HEK293T (cell line): ENCODE measurements at regions of chr9 and their contacts with region 1.

Region 1: GRCh38 chr9:132249123-132249522 is 87.3 kb downstream of the NTNG2 start:
- DNase-seq: no peak

Region 2: GRCh38 chr9:131759017-131759647 is 490.0 kb before region 1 on chr9:
- CTCF ChIA-PET with region 1: interaction called, 11 read pairs
- POLR2A ChIA-PET with region 1: no interaction called
- DNase-seq: no peak

Region 3: GRCh38 chr9:132185073-132186012 is 63.8 kb before region 1 on chr9:
- CTCF ChIA-PET with region 1: no interaction called
- POLR2A ChIA-PET with region 1: no interaction called
- DNase-seq: no peak

Region 4: DNA sequence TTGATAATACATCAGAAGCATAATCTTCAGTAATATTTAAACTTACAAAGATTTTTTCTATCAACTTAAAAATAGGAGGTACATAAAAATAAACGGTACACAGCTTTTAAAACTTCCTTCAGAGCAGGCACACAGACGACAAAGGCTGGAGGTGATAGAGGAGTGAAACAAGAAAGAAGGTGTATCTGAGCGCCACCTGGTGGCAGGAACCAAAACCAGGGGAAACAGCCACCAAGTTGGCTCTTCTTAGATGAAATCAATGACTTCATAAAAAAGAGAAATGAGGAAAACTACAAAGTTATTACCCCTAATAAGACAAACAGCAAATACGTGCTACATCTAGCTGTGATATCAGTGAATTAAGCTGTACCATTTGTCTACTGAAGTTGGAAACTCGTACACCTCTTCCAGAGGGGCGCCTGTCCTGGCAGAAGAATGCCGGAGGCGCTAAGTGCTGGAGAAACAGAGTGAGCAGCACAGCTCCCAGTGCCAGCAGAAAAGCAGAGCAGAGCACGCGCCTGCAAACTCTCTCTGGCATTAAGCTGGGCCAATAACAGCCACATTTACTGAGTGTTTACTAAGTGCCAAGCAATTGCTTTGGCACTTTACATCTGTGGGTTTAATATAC is 19.7 kb after region 1 on chr9:
- CTCF ChIA-PET with region 1: interaction called, 10 read pairs
- POLR2A ChIA-PET with region 1: no interaction called
- DNase-seq: peak; percentile 68